ENCODE measurements at regions of chr9 and their contacts with region 1.

Region 1: GRCh38 chr9:15510789-15511575 is at the start of gene PSIP1:
- DNase-seq: peak; percentile 43
- H3K4me3 ChIP-seq: peak within 1 kb of the TSS; percentile 94 to 95
- H3K27ac ChIP-seq: peak within 1 kb of the TSS; percentile 79 to 86
- H3K4me1 ChIP-seq: no peaks in the 10 kb centered on the region
- H3K27me3 ChIP-seq: no peaks in the 10 kb centered on the region
- CTCF ChIP-seq: peak in 2 of 4 experiments; percentile 25 to 40
- POLR2A ChIP-seq: peak; percentile 62
- total RNA-seq, gene PSIP1: 65.3 to 69.6 TPM

Region 2: GRCh38 chr9:15552636-15553527 is 41.9 kb after region 1 on chr9 and contains the start of gene CCDC171:
- intact Hi-C with region 1: loop called (anchors 2 kb)
- DNase-seq: peak; percentile 92
- H3K4me3 ChIP-seq: peak within 1 kb of the TSS; percentile 57 to 66
- H3K27ac ChIP-seq: peak within 1 kb of the TSS; percentile 79 to 82
- H3K4me1 ChIP-seq: no peaks in the 10 kb centered on the region
- H3K27me3 ChIP-seq: no peaks in the 10 kb centered on the region
- CTCF ChIP-seq: no peak
- POLR2A ChIP-seq: peak; percentile 77
- total RNA-seq, gene CCDC171: 2.0 to 7.6 TPM